ENCODE measurements at regions of chr2 and their contacts with region 1.

Region 1: DNA sequence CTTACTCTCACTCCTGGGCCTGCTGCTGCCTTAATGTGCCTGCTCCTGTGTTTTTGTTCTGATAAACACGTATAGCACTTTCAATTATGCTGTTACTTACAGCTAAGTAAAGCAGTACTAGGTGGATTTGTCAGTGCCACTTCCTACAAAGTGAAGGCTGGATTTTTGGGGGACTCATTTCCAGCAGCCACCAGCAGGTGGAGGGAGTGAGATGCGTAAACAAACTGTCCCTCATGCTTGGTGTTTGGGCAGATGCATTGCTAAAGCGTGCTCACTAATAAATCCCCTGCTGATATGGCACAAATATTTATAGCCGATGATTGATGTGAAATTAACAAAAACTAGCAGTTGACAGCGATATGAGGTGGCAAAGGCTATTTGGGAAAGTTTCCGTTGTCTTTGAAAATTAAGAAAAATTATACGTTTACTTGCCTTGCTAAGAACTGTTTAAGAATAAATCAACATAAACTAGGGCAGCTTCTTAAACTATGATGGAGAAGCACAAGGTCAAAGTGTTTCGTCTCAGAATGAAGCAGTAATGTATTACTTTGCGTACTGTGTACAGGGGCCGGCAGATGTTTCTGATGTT is 101.7 kb downstream of the AGAP1 start:
- DNase-seq: peak; percentile 59 to 79 (median 70)
- ATAC-seq: peak; percentile 61
- H3K4me3 ChIP-seq: no peak overlapping the region
- H3K27ac ChIP-seq: no peak overlapping the region
- H3K4me1 ChIP-seq: peaks cover 2% of the 10 kb centered on the region
- H3K27me3 ChIP-seq: no peaks in the 10 kb centered on the region
- CTCF ChIP-seq: peak; percentile 49 to 79 (median 72)
- POLR2A ChIP-seq: no peak

Region 2: GRCh38 chr2:235142601-235143000 is 452.9 kb before region 1 on chr2:
- intact Hi-C with region 1: loop called (anchors 5 kb)
- DNase-seq: peak in 2 of 4 donors; percentile 23 to 34
- ATAC-seq: peak; percentile 40
- H3K4me3 ChIP-seq: no peak overlapping the region
- H3K27ac ChIP-seq: no peak overlapping the region
- H3K4me1 ChIP-seq: no peaks in the 10 kb centered on the region
- H3K27me3 ChIP-seq: no peaks in the 10 kb centered on the region
- CTCF ChIP-seq: no peak
- POLR2A ChIP-seq: no peak

Region 3: GRCh38 chr2:235746257-235747084 is 151.0 kb after region 1 on chr2:
- intact Hi-C with region 1: loop called (anchors 5 kb)
- DNase-seq: peak; percentile 71 to 78 (median 74)
- ATAC-seq: peak; percentile 91
- H3K4me3 ChIP-seq: no peak overlapping the region
- H3K27ac ChIP-seq: no peak overlapping the region
- H3K4me1 ChIP-seq: no peaks in the 10 kb centered on the region
- H3K27me3 ChIP-seq: no peaks in the 10 kb centered on the region
- CTCF ChIP-seq: peak; percentile 62 to 90 (median 77)
- POLR2A ChIP-seq: no peak